Left cardiac atrium (tissue), 4 donors: ENCODE measurements at regions of chr11 and their contacts with region 1.

Region 1: GRCh38 chr11:69888483-69889076 is 69.4 kb upstream of the FGF3 start:
- DNase-seq: peak; percentile 61
- ATAC-seq: peak; percentile 57 to 65

Region 2: GRCh38 chr11:69541531-69542328 is 346.9 kb before region 1 on chr11:
- intact Hi-C with region 1: no loop called
- DNase-seq: peak; percentile 12
- ATAC-seq: peak; percentile 10 to 27

Region 3: DNA sequence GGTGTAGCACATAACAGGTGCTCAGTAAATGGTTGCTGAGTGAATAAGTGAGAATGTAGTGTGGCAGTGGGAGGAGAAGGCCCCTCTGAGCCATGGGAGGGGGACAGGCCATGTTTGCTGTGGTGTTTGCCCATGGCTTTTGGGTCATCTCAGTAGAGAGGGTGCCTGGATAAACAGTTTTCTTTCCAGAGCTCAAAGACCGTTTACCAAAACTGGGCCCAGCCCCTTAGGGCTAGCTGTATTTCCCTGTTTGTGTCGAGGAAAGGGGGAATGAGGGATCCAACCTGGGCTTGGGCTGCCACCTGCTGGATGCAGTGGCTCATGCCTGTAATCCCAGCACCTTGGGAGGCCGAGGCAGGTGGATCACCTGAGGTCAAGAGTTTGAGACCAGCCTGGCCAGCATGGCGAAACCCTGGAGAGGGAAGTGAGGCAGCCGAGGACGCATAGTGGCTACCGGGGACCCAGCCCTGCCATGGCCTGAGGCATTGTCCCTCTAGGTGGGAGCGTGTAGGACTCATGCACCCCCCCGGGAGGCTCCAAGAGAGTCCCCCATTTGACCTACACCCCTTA is 204.7 kb before region 1 on chr11:
- intact Hi-C with region 1: loop called (anchors 2 to 5 kb)
- DNase-seq: no peak
- ATAC-seq: no peak

Region 4: DNA sequence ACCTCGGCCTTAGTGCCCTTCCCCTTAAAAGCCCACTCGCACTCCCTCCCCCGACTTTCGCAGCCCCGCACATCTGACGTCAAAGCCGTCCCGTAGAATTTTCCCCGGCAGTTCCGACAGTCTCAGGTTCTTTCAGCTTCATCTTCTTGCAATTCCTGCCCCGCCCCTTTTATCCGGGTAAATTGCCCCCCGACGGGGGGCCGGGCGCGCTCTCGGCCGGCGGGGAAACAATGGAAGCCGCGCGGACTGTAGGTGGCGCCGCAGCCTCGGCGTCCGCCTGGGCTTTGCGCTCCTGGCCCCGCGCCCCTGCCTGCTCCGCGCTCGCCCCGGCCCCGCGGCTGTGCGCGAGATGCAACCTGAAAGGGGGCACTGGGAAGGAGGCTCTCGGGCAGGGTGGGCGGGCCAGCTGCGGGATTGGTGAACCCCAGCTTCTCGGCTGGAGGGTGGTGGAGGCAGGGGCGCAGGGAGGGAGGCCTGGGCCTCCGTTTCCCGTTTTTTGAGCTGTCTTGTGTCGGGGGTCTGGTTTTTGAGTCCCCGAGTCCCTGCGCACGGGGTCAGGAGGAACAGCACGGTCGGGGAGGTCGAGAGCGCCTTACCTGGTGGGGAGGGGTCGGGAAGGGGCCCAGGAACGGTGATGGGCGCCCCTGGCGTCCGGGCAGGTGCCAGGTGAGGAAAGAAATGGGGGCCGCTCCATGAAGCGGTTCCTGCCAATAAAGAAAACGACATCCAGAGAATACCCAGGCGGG is 183.9 kb before region 1 on chr11:
- intact Hi-C with region 1: loop called in 1 of 2 experiments (anchors 5 kb)
- DNase-seq: no peak
- ATAC-seq: peak in 1 of 2 donors; percentile 45

Region 5: DNA sequence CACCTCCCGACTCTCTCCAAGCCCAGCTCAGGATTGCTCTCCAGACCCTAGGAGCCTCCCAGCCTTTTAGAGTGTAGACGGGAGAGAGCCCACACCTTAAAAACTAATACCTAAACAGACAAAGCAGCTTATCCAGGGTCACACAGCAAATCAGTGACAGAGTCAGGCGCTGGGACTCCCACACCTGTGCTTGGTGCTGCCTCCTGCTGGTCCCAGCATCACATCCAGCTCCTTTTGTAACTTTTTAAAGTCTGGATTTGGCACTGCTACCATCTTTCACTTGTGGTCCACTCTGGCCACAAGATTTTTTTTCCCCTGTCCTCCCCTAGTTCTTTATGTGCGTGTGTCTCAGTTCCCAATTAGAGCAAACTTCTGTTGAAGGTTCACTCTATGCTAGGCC is 194.2 kb after region 1 on chr11:
- intact Hi-C with region 1: no loop called
- DNase-seq: no peak
- ATAC-seq: no peak